Sciatic nerve (tissue), 2 donors: ENCODE measurements at regions of chrX and their contacts with region 1.

Region 1: GRCh38 chrX:150253959-150254620 is 109.0 kb upstream of the MAMLD1 start:
- DNase-seq: no peak
- ATAC-seq: no peak

Region 2: GRCh38 chrX:150269605-150270254 is 15.6 kb after region 1 on chrX:
- intact Hi-C with region 1: loop called (anchors 1 kb)
- DNase-seq: no peak
- ATAC-seq: no peak